CD4-positive, alpha-beta memory T cell (primary cell): ENCODE measurements at regions of chr5 and their contacts with region 1.

Region 1: DNA sequence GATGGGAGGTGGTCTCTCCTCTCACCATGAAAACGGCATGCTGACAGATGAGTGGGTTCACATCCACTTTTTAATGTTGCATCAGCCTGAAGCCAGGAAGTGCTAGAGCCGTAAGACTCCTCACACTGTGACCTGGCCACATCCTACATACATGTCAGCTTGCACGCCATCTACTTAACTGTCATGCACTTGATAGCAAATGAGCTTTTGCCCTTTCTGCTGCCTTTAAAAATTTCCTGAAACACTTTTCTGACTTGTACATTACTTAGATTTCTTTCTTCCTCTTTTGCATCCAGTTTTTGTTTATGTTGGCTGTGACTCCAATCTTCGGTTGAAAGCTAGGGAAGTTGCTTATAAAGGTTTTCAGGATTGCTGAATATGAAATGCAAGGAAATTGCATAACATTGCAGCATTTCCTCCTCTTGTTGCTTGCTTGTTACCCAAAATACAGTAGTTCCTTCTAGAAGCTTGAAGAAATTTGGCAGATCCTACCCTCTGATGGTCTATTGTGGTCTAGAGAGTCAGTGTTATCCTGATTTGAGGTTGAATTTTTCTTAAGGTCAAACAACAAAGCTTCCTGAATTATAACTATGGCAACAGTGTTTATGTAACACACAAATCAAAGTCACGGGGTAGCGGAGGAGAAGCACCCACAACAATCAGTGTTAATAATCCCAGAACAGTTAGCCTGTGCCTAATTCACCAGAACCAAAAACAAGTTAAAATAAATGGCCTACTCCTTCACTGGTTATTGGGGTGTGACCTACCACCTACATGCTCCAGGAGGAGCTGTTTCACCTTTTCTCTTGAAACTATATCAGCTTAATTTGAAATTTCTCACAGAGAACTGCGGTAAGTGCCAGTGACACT is 232.5 kb downstream of the ARHGAP26 start:
- DNase-seq: peak; percentile 72 to 88 (median 75)
- H3K4me3 ChIP-seq: no peak overlapping the region
- H3K4me3 Mint-ChIP-seq: peak overlapping the region; percentile 40 to 79 (median 61)
- H3K27ac ChIP-seq: peak overlapping the region; percentile 77
- H3K27ac Mint-ChIP-seq: peak overlapping the region; percentile 87 to 98 (median 96)
- H3K4me1 ChIP-seq: peaks cover 54% of the 10 kb centered on the region
- H3K4me1 Mint-ChIP-seq: peaks cover 46 to 76% (median 57%) of the 10 kb centered on the region in 4 donors
- H3K27me3 ChIP-seq: no peaks in the 10 kb centered on the region
- H3K27me3 Mint-ChIP-seq: no peaks in the 10 kb centered on the region

Region 2: GRCh38 chr5:142959683-142960657 is 42.7 kb before region 1 on chr5:
- CTCF ChIA-PET with region 1: interaction called, 7 read pairs
- POLR2A ChIA-PET with region 1: interaction called, 27 read pairs
- intact Hi-C with region 1: loop called (anchors 1 kb)
- DNase-seq: no peak
- H3K4me3 ChIP-seq: no peak overlapping the region
- H3K4me3 Mint-ChIP-seq: no peak overlapping the region
- H3K27ac ChIP-seq: no peak overlapping the region
- H3K27ac Mint-ChIP-seq: peak overlapping the region in 3 of 7 donors; percentile 12 to 49 (median 40)
- H3K4me1 ChIP-seq: peaks cover 9% of the 10 kb centered on the region
- H3K4me1 Mint-ChIP-seq: peaks cover 7 to 19% (median 15%) of the 10 kb centered on the region in 4 donors
- H3K27me3 ChIP-seq: no peaks in the 10 kb centered on the region
- H3K27me3 Mint-ChIP-seq: no peaks in the 10 kb centered on the region

Region 3: GRCh38 chr5:143014017-143014651 is 11.4 kb after region 1 on chr5:
- CTCF ChIA-PET with region 1: interaction called, 27 read pairs
- POLR2A ChIA-PET with region 1: interaction called, 9 read pairs
- intact Hi-C with region 1: no loop called
- DNase-seq: no peak
- H3K4me3 ChIP-seq: no peak overlapping the region
- H3K4me3 Mint-ChIP-seq: no peak overlapping the region
- H3K27ac ChIP-seq: no peak overlapping the region
- H3K27ac Mint-ChIP-seq: peak overlapping the region in 5 of 7 donors; percentile 28 to 77 (median 48)
- H3K4me1 ChIP-seq: peaks cover 11% of the 10 kb centered on the region
- H3K4me1 Mint-ChIP-seq: peaks cover 6 to 13% (median 10%) of the 10 kb centered on the region in 4 donors
- H3K27me3 ChIP-seq: no peaks in the 10 kb centered on the region
- H3K27me3 Mint-ChIP-seq: no peaks in the 10 kb centered on the region

Region 4: DNA sequence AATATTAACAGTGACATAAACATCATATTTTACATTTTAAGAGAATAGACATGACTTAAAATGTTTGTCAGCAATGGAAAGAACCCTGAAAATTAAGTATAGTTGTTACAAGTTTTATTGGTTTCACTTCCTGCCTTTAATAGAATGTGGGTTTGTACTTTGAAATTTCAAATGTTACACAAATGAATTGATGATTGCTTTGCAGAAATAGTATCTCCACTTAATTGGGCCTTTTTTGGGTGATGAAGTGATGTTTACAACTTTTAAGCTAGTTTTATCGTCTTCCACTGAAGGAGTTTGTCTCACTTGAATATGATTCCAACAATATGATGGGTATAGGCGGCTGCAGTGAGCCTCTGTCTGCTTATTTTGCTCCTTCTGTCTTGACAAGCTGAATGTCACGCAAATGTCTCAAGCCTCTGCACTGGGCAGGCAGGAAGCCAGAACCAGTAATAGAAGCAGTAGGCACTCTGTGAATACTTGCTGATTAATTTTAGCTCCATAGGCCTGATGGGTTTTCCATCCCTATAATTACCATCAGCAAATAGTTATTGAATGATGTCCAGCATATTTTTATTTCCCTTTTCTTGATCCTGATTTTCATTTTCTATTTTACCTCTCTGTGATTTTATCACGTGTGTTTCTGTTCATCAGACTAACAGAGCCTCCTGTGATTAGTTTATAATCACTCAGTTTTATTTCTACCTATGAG is 411.4 kb after region 1 on chr5:
- CTCF ChIA-PET with region 1: no interaction called
- POLR2A ChIA-PET with region 1: interaction called, 13 read pairs
- intact Hi-C with region 1: no loop called
- DNase-seq: peak in 1 of 5 donors; percentile 44
- H3K4me3 ChIP-seq: no peak overlapping the region
- H3K4me3 Mint-ChIP-seq: peak overlapping the region; percentile 28 to 73 (median 63)
- H3K27ac ChIP-seq: peak overlapping the region; percentile 33
- H3K27ac Mint-ChIP-seq: peak overlapping the region; percentile 4 to 92 (median 72)
- H3K4me1 ChIP-seq: peaks cover 87% of the 10 kb centered on the region
- H3K4me1 Mint-ChIP-seq: peaks cover 30 to 64% (median 48%) of the 10 kb centered on the region in 4 donors
- H3K27me3 ChIP-seq: no peaks in the 10 kb centered on the region
- H3K27me3 Mint-ChIP-seq: no peaks in the 10 kb centered on the region

Region 5: DNA sequence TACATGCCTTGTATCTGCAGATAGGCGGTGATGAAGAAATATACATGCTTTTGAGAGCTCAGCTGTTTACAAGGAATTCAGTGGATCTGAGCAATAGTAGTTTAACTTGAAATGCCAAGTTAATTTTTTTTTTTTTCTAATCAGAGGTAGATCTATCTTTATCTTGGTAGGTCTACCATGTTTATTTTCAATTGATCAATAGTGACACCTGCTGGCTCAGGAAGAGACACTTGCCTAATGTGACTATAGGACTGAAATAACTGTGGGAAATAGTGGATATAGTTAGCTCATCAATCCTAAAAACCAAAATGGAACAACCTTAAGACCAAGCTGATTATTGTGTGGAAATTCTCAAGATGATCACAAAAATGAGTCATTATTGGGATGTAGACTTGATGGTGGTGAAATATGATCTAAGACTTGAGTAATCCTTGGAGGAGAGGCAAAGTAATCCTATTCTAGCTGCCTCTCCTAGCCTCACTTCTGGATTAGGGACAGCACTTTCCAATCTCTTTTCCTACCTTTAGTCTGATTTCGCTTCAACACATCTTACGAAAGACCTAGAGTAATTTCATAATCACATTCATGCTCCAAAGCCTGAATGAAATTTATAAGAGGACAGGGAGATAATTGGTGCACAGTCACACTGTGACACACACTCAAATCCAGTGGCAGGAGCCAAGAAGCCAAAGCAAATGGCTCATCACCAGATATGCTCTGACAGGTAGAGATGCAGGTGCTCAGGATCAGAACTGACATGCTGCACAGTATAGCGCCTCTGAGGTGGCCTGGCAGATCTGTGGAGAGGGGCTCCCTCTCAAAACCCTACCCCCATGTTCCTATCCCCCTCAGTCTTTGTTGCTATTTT is 965.6 kb after region 1 on chr5:
- CTCF ChIA-PET with region 1: no interaction called
- POLR2A ChIA-PET with region 1: interaction called, 5 read pairs
- intact Hi-C with region 1: loop called (anchors 10 kb)
- DNase-seq: peak in 4 of 5 donors; percentile 14 to 24 (median 22)
- H3K4me3 ChIP-seq: no peak overlapping the region
- H3K4me3 Mint-ChIP-seq: no peak overlapping the region
- H3K27ac ChIP-seq: no peak overlapping the region
- H3K27ac Mint-ChIP-seq: no peak overlapping the region
- H3K4me1 ChIP-seq: no peaks in the 10 kb centered on the region
- H3K4me1 Mint-ChIP-seq: peaks cover 0 to 3% (median 0%) of the 10 kb centered on the region in 4 donors
- H3K27me3 ChIP-seq: no peaks in the 10 kb centered on the region
- H3K27me3 Mint-ChIP-seq: peaks cover 4 to 13% of the 10 kb centered on the region in 2 donors